ENCODE measurements at regions of chr5 and their contacts with region 1.

Region 1: GRCh38 chr5:170105642-170106611 is at the start of gene FOXI1:
- DNase-seq: no peak
- ATAC-seq: peak; percentile 95
- H3K4me3 ChIP-seq: no peak within 1 kb of the TSS
- H3K27ac ChIP-seq: no peak within 1 kb of the TSS
- H3K4me1 ChIP-seq: peaks cover 0 to 5% of the 10 kb centered on the region in 2 donors
- H3K27me3 ChIP-seq: no peaks in the 10 kb centered on the region
- CTCF ChIP-seq: no peak
- polyA plus RNA-seq, gene FOXI1: 0.07 to 0.09 TPM in 2 of 6 donors, not detected in the others

Region 2: GRCh38 chr5:170183816-170184687 is 78.1 kb after region 1 on chr5:
- intact Hi-C with region 1: loop called in 1 of 2 experiments (anchors 5 kb)
- DNase-seq: peak in 3 of 4 donors; percentile 64 to 82 (median 66)
- ATAC-seq: peak; percentile 97
- H3K4me3 ChIP-seq: no peak overlapping the region
- H3K27ac ChIP-seq: no peak overlapping the region
- H3K4me1 ChIP-seq: no peaks in the 10 kb centered on the region
- H3K27me3 ChIP-seq: no peaks in the 10 kb centered on the region
- CTCF ChIP-seq: peak; percentile 66 to 77

Region 3: DNA sequence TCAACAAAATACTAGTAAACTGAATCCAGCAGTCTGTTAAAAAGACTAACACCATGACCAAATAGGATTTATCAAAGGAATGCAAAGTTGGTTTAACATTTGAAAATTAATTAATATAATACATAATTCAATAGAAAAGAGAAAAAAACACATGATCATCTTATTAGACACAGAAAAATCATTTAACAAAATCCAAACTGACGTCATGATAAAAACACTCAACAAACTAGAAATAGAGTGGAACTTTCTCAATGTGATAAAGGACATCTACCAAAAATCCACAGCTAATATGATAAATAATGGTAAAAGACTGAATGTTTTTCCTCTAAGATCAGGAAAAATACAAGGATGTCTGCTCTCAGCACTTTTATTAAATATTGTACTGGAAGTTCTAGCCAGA is 357.5 kb after region 1 on chr5:
- intact Hi-C with region 1: no loop called
- DNase-seq: no peak
- ATAC-seq: no peak
- H3K4me3 ChIP-seq: no peak overlapping the region
- H3K27ac ChIP-seq: no peak overlapping the region
- H3K4me1 ChIP-seq: no peaks in the 10 kb centered on the region
- H3K27me3 ChIP-seq: no peaks in the 10 kb centered on the region
- CTCF ChIP-seq: no peak